HepG2 (cell line): ENCODE measurements at regions of chr13 and their contacts with region 1.

Region 1: GRCh38 chr13:100588331-100589177 is at the start of gene GGACT:
- DNase-seq: peak; percentile 37
- ATAC-seq: peak; percentile 94
- H3K4me3 ChIP-seq: peak within 1 kb of the TSS; percentile 43 to 76 (median 68)
- H3K27ac ChIP-seq: no peak within 1 kb of the TSS
- H3K4me1 ChIP-seq: peaks cover 23% of the 10 kb centered on the region
- H3K27me3 ChIP-seq: no peaks in the 10 kb centered on the region
- CTCF ChIP-seq: peak; percentile 80
- EP300 ChIP-seq: 0 out of 4 replicates have a peak, but pooled peaks of 1 of the 2 experiments have one; percentile 9
- POLR2A ChIP-seq: peak; percentile 29 to 43; a peak in 2 of 4 replicates
- RAD21 ChIP-seq: peak; percentile 86
- total RNA-seq, gene GGACT: 1.6 and 1.9 TPM in 2 replicates

Region 2: DNA sequence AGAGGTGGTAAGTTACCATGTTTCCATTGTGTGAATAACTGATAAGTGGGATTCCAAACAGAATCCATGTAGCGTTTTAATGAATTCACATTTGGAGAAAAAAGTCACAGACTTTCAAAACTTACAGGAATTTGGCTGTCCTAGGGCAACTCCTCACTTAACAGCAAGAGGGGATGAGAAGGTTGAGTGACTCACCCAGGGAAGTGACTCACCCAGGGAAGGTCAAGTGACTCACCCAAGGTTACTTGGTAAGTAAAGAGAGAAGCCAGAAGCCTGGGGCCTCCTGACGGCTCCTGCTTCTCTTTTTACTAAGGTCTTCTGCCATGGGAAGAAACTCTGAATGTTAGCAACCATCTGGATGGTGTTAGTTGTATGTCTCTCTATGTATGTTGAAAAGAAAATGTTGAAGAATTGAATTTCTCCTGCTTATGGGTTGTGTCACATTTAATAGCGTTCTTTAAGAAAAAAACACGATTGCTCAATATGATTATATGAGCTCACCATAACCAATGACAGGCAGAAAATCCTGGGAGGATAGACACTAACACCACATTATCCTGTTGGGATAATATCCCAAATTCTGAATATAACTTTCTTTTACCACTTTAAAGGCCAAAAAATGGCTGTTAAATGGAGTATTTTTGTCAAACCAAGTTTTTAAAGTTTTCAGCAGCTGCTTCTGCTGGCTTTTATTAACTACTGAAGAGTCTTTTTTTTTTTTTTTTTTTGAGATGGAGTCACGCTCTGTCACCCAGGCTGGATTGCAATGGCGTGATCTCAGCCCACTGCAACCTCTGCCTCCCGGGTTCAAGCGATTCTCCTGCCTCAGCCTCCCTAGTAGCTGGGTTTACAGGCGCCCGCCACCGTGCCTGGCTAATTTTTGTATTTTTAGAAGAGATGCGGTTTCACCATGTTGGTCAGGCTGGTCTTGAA is 195.6 kb before region 1 on chr13:
- CTCF ChIA-PET with region 1: no interaction called
- POLR2A ChIA-PET with region 1: no interaction called
- in situ Hi-C with region 1: no loop called
- intact Hi-C with region 1: no loop called
- DNase-seq: peak; percentile 91
- ATAC-seq: peak; percentile 95
- H3K4me3 ChIP-seq: no peak overlapping the region
- H3K27ac ChIP-seq: peak overlapping the region; percentile 36
- H3K4me1 ChIP-seq: peaks cover 17% of the 10 kb centered on the region
- H3K27me3 ChIP-seq: no peaks in the 10 kb centered on the region
- CTCF ChIP-seq: no peak
- EP300 ChIP-seq: peak; percentile 42 to 74; a peak in 2 of 4 replicates
- POLR2A ChIP-seq: no peak
- RAD21 ChIP-seq: no peak

Region 3: GRCh38 chr13:100573121-100573520 is 15.4 kb before region 1 on chr13:
- CTCF ChIA-PET with region 1: interaction called, 7 read pairs
- POLR2A ChIA-PET with region 1: no interaction called
- in situ Hi-C with region 1: no loop called
- intact Hi-C with region 1: loop called (anchors 1 kb)
- DNase-seq: peak; percentile 77
- ATAC-seq: peak; percentile 96
- H3K4me3 ChIP-seq: no peak overlapping the region
- H3K27ac ChIP-seq: no peak overlapping the region
- H3K4me1 ChIP-seq: peaks cover 28% of the 10 kb centered on the region
- H3K27me3 ChIP-seq: no peaks in the 10 kb centered on the region
- CTCF ChIP-seq: peak; percentile 82
- EP300 ChIP-seq: no peak
- POLR2A ChIP-seq: no peak
- RAD21 ChIP-seq: 0 out of 2 replicates have a peak, but pooled peaks have one; percentile 22

Region 4: GRCh38 chr13:101202590-101202989 is 614.0 kb after region 1 on chr13:
- CTCF ChIA-PET with region 1: no interaction called
- POLR2A ChIA-PET with region 1: no interaction called
- in situ Hi-C with region 1: no loop called
- intact Hi-C with region 1: no loop called
- DNase-seq: no peak
- ATAC-seq: peak; percentile 83
- H3K4me3 ChIP-seq: no peak overlapping the region
- H3K27ac ChIP-seq: no peak overlapping the region
- H3K4me1 ChIP-seq: no peaks in the 10 kb centered on the region
- H3K27me3 ChIP-seq: no peaks in the 10 kb centered on the region
- CTCF ChIP-seq: no peak
- EP300 ChIP-seq: no peak
- POLR2A ChIP-seq: no peak
- RAD21 ChIP-seq: no peak